ENCODE measurements at regions of chr3 and their contacts with region 1.

Region 1: GRCh38 chr3:136196401-136197158 is 445 bp upstream of the MSL2 start:
- DNase-seq: peak; percentile 99
- H3K4me3 ChIP-seq: peak overlapping the region; percentile 88 to 99
- H3K27ac ChIP-seq: peak overlapping the region; percentile 99 to 100
- H3K4me1 ChIP-seq: peaks cover 2% of the 10 kb centered on the region
- H3K27me3 ChIP-seq: no peaks in the 10 kb centered on the region
- CTCF ChIP-seq: peak in 2 of 4 experiments; percentile 12 to 19
- POLR2A ChIP-seq: peak; percentile 75

Region 2: DNA sequence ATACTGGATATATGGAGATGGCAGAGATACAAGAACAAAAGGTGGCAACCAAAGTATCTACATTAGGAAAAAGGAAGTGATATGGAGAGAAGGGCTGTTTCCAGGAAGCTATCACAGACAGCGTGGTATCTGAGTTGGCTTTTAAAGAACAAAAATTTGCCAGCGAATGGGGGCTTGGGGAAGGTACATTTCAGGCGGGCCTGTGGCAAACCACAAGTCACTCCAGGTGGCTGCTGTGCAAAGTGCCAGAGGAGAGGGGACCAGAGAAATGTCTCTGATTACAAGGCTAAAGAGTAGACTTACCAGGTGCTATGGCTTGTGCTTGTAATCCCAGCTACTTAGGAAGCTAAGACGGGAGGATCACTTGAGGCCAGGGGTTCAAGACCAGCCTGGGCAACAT is 91.5 kb before region 1 on chr3:
- intact Hi-C with region 1: no loop called
- DNase-seq: no peak
- H3K4me3 ChIP-seq: no peak overlapping the region
- H3K27ac ChIP-seq: no peak overlapping the region
- H3K4me1 ChIP-seq: no peaks in the 10 kb centered on the region
- H3K27me3 ChIP-seq: no peaks in the 10 kb centered on the region
- CTCF ChIP-seq: no peak
- POLR2A ChIP-seq: no peak

Region 3: GRCh38 chr3:136250226-136250902 is 53.8 kb after region 1 on chr3 and contains the start of gene PCCB:
- intact Hi-C with region 1: loop called (anchors 5 kb)
- DNase-seq: peak; percentile 94
- H3K4me3 ChIP-seq: peak within 1 kb of the TSS; percentile 52 to 79
- H3K27ac ChIP-seq: peak within 1 kb of the TSS; percentile 85 to 90
- H3K4me1 ChIP-seq: peaks cover 4% of the 10 kb centered on the region
- H3K27me3 ChIP-seq: no peaks in the 10 kb centered on the region
- CTCF ChIP-seq: peak; percentile 74 to 96 (median 89)
- POLR2A ChIP-seq: peak; percentile 31
- total RNA-seq, gene PCCB: 60.9 to 70.3 TPM

Region 4: GRCh38 chr3:136326316-136326715 is 129.7 kb after region 1 on chr3:
- intact Hi-C with region 1: no loop called
- DNase-seq: no peak
- H3K4me3 ChIP-seq: no peak overlapping the region
- H3K27ac ChIP-seq: no peak overlapping the region
- H3K4me1 ChIP-seq: no peaks in the 10 kb centered on the region
- H3K27me3 ChIP-seq: no peaks in the 10 kb centered on the region
- CTCF ChIP-seq: no peak
- POLR2A ChIP-seq: no peak

Region 5: GRCh38 chr3:136350132-136350531 is 153.6 kb after region 1 on chr3:
- intact Hi-C with region 1: loop called (anchors 10 kb)
- DNase-seq: no peak
- H3K4me3 ChIP-seq: no peak overlapping the region
- H3K27ac ChIP-seq: no peak overlapping the region
- H3K4me1 ChIP-seq: no peaks in the 10 kb centered on the region
- H3K27me3 ChIP-seq: no peaks in the 10 kb centered on the region
- CTCF ChIP-seq: no peak
- POLR2A ChIP-seq: no peak

Region 6: DNA sequence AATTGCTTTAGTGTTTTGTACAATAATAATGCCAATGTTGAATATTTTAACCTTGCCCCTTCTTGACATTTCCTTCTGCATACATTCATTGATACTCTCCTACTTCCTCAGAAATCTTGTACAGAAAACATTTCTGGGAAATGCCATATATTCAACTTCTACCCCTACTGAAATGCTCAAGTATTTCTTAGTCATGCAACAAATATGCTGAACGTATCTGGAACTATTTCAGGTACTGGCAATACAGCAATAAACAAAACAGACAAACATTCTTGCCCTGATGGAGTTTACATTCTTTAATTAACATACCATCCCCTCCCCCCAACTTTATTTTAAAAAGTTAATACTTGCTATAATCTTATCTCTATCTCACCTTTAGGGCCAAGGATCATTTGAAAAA is 408.4 kb after region 1 on chr3:
- intact Hi-C with region 1: no loop called
- DNase-seq: no peak
- H3K4me3 ChIP-seq: no peak overlapping the region
- H3K27ac ChIP-seq: no peak overlapping the region
- H3K4me1 ChIP-seq: no peaks in the 10 kb centered on the region
- H3K27me3 ChIP-seq: no peaks in the 10 kb centered on the region
- CTCF ChIP-seq: no peak
- POLR2A ChIP-seq: no peak

Measured in prostate gland (tissue), 2 donors.